ENCODE measurements at regions of chr7 and their contacts with region 1.

Region 1: DNA sequence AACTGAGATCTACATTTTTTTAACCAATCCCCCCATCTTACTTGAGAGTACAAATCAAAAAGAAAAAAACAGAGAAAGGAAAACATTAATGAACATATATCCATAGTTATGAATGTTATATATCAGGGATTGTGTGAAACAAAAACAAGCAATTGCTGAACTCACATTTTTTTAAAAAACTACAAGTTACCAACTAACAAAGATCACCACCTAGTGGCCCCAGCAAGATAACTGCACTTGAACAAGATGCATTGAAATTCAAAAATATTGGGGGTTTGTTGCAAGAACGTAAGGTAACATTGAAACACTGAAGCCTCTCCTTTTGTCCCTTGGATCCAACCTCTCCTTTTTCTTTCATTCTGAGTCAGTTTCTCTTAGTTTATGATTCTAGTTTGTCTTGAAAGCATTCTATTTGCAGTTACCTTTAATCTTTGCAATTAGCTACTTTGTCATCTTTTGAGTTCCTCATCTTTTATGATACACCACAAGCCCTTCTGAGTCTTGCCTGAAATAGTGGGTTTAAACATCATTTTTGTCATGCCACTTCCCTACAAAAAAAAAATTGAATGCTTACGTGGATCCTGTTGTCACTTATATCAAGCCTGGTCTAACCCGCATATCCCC is 87.3 kb upstream of the TES start:
- DNase-seq: peak; percentile 20
- ATAC-seq: no peak
- H3K4me3 ChIP-seq: no peak overlapping the region
- H3K27ac ChIP-seq: no peak overlapping the region
- H3K4me1 ChIP-seq: no peaks in the 10 kb centered on the region
- H3K27me3 ChIP-seq: no peaks in the 10 kb centered on the region
- CTCF ChIP-seq: peak; percentile 44
- EP300 ChIP-seq: no peak
- POLR2A ChIP-seq: no peak
- RAD21 ChIP-seq: no peak

Region 2: DNA sequence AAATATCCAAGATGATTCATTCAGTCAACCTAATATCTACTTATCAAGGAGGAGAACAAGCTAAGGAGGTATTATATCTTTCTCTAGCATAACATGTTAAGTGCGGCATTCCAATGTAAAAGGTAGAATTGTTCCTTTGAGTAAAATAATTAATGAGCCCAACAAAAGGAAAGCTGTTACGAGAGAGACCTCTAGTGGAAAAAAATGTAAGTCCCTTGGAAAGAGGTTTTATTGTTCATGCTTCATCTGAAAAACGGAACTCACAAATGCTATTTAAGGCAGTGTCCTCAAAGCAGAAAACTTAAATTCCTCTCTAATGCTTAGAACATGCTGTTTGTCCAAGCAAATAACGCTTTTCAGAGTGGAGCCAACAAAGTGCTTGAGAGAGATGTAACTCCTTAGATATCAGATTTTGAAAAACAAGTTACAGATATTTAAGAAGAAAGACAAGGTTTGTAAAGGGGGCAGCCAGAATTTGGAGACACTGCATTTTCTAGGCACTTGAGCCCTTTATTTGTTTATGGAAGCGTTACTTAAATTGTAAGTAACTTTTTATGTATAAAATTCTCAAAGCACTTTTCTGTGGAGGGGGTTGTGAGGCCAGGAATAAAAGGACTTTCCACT is 212.4 kb before region 1 on chr7:
- CTCF ChIA-PET with region 1: no interaction called
- POLR2A ChIA-PET with region 1: no interaction called
- in situ Hi-C with region 1: no loop called
- intact Hi-C with region 1: loop called (anchors 10 kb)
- DNase-seq: peak; percentile 14
- ATAC-seq: no peak
- H3K4me3 ChIP-seq: no peak overlapping the region
- H3K27ac ChIP-seq: no peak overlapping the region
- H3K4me1 ChIP-seq: no peaks in the 10 kb centered on the region
- H3K27me3 ChIP-seq: no peaks in the 10 kb centered on the region
- CTCF ChIP-seq: peak; percentile 59
- EP300 ChIP-seq: no peak
- POLR2A ChIP-seq: no peak
- RAD21 ChIP-seq: no peak

Measured in HepG2 (cell line).